ENCODE measurements at regions of chr5 and their contacts with region 1.

Region 1: DNA sequence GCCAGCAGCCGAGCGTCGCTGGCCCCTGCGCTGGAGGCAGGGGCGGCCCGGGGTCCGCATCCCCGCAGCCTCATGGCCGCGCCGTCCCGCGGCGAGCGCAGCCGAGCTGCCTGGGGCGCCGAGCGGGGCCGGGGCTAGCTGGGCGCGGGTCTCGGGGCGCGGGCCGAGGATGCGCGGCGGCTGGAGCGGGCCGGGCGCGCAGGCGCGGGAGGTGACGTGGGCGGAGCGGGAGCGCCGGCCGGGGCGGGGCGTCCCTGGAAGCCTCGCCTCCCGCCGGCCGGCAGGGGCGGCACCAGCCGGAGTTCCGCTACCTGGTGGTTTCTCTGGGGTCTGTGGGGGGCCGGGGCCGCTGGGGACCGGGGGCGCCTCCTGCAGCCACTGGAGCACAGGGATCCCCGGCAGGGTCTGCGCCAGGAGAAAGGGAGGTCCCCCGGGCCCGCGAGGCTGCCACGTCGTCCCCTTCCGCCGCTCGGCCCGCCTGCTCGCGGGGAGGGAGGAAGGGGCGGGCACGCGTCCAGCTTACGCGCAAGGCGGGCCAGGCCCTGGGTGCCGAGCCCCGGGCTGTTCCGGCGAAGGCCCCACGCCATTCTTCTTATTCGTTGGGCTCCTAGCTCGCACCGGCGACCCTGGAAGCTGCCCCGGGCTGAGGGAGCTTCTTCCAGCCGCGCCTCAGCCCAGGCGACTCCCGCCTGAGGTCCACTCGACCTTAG is at the start of gene LPCAT1:
- DNase-seq: peak; percentile 60
- ATAC-seq: peak; percentile 89
- H3K4me3 ChIP-seq: peak within 1 kb of the TSS; percentile 99
- H3K27ac ChIP-seq: peak within 1 kb of the TSS; percentile 92
- H3K4me1 ChIP-seq: peaks cover 9% of the 10 kb centered on the region
- H3K27me3 ChIP-seq: peaks cover 6% of the 10 kb centered on the region
- CTCF ChIP-seq: no peak
- POLR2A ChIP-seq: peak; percentile 50
- RAD21 ChIP-seq: no peak
- total RNA-seq, gene LPCAT1: 17.7 and 22.2 TPM in 2 replicates

Region 2: GRCh38 chr5:1479581-1480188 is 44.2 kb before region 1 on chr5:
- CTCF ChIA-PET with region 1: no interaction called
- POLR2A ChIA-PET with region 1: no interaction called
- dilution Hi-C with region 1: no loop called
- in situ Hi-C with region 1: no loop called
- intact Hi-C with region 1: loop called (anchors 5 kb)
- DNase-seq: peak; percentile 36
- ATAC-seq: peak; percentile 55; the same call in 1 of the 2 replicates
- H3K4me3 ChIP-seq: no peak overlapping the region
- H3K27ac ChIP-seq: no peak overlapping the region
- H3K4me1 ChIP-seq: no peaks in the 10 kb centered on the region
- H3K27me3 ChIP-seq: no peaks in the 10 kb centered on the region
- CTCF ChIP-seq: peak; percentile 64
- POLR2A ChIP-seq: no peak
- RAD21 ChIP-seq: peak; percentile 62